ENCODE measurements at regions of chr2 and their contacts with region 1.

Region 1: GRCh38 chr2:85009019-85009618 is 38.2 kb downstream of the KCMF1 start:
- DNase-seq: no peak
- ATAC-seq: peak in 1 of 3 donors; percentile 25
- H3K4me3 ChIP-seq: no peak overlapping the region
- H3K4me3 Mint-ChIP-seq: no peak overlapping the region
- H3K27ac ChIP-seq: no peak overlapping the region
- H3K27ac Mint-ChIP-seq: peak overlapping the region; percentile 6 to 47
- H3K4me1 ChIP-seq: peaks cover 22% of the 10 kb centered on the region
- H3K4me1 Mint-ChIP-seq: peaks cover 62 to 63% of the 10 kb centered on the region in 2 donors
- H3K27me3 ChIP-seq: no peaks in the 10 kb centered on the region
- H3K27me3 Mint-ChIP-seq: no peaks in the 10 kb centered on the region
- CTCF ChIP-seq: no peak

Region 2: DNA sequence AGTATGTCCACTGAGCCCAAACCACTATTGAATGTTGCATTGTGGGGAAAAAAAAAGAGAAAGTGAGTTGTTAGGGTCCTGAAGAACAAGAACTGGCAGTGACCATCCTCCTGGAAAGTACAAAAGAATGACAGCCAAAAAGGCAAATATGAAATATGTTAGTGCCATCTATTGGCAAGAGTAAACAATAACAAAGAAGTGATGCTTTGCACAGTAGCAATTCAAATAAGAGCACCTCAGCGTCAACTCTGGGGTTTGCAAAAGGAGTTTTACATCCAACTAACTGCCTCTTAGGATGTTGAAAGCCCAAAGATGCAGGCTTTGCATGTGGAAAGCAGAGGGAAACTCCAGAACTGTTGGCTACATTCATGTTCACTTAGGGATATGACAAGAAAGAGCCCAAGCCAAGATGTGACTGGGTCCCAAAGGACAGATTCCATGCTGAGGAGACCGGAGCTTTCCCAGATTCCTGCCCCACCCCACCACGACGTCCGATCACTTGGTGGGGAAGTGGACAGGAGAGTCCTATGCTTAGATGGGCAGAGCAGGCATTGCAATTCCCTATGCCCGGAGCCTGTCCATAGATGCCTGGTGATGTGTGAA is 143.8 kb before region 1 on chr2:
- intact Hi-C with region 1: no loop called
- DNase-seq: peak in 1 of 2 donors; percentile 72
- ATAC-seq: peak; percentile 67 to 87 (median 85)
- H3K4me3 ChIP-seq: no peak overlapping the region
- H3K4me3 Mint-ChIP-seq: no peak overlapping the region
- H3K27ac ChIP-seq: no peak overlapping the region
- H3K27ac Mint-ChIP-seq: peak overlapping the region; percentile 75 to 80
- H3K4me1 ChIP-seq: peaks cover 9% of the 10 kb centered on the region
- H3K4me1 Mint-ChIP-seq: peaks cover 10 to 12% of the 10 kb centered on the region in 2 donors
- H3K27me3 ChIP-seq: no peaks in the 10 kb centered on the region
- H3K27me3 Mint-ChIP-seq: peaks cover 0 to 3% of the 10 kb centered on the region in 2 donors
- CTCF ChIP-seq: peak; percentile 77

Region 3: GRCh38 chr2:84939426-84940087 is 69.6 kb before region 1 on chr2:
- intact Hi-C with region 1: loop called (anchors 2 kb)
- DNase-seq: peak; percentile 63 to 91
- ATAC-seq: peak; percentile 81 to 95 (median 88)
- H3K4me3 ChIP-seq: peak overlapping the region; percentile 6
- H3K4me3 Mint-ChIP-seq: peak overlapping the region; percentile 81
- H3K27ac ChIP-seq: peak overlapping the region; percentile 89
- H3K27ac Mint-ChIP-seq: peak overlapping the region; percentile 93 to 98
- H3K4me1 ChIP-seq: peaks cover 38% of the 10 kb centered on the region
- H3K4me1 Mint-ChIP-seq: peaks cover 17 to 18% of the 10 kb centered on the region in 2 donors
- H3K27me3 ChIP-seq: no peaks in the 10 kb centered on the region
- H3K27me3 Mint-ChIP-seq: no peaks in the 10 kb centered on the region
- CTCF ChIP-seq: no peak

Measured in natural killer cell (primary cell).